H1 (cell line): ENCODE measurements at regions of chr1 and their contacts with region 1.

Region 1: GRCh38 chr1:214328770-214329469 is 48.0 kb downstream of the SMYD2 start:
- DNase-seq: peak; percentile 75 to 87
- H3K4me3 ChIP-seq: no peak overlapping the region
- H3K27ac ChIP-seq: no peak overlapping the region
- H3K4me1 ChIP-seq: no peaks in the 10 kb centered on the region; a peak in 2 of 7 replicates
- H3K27me3 ChIP-seq: no peaks in the 10 kb centered on the region
- CTCF ChIP-seq: peak; percentile 91 to 97 (median 96)
- EP300 ChIP-seq: peak in 1 of 2 experiments; percentile 8; a peak in 1 of 3 replicates
- POLR2A ChIP-seq: no peak
- RAD21 ChIP-seq: peak; percentile 100

Region 2: GRCh38 chr1:214076708-214077065 is 252.2 kb before region 1 on chr1:
- CTCF ChIA-PET with region 1: no interaction called
- POLR2A ChIA-PET with region 1: no interaction called
- DNase-seq: no peak
- H3K4me3 ChIP-seq: no peak overlapping the region
- H3K27ac ChIP-seq: no peak overlapping the region
- H3K4me1 ChIP-seq: peaks cover 0 to 9% (median 0%) of the 10 kb centered on the region in 4 experiments; a peak in 2 of 7 replicates
- H3K27me3 ChIP-seq: no peaks in the 10 kb centered on the region
- CTCF ChIP-seq: no peak
- EP300 ChIP-seq: no peak
- POLR2A ChIP-seq: no peak
- RAD21 ChIP-seq: no peak

Region 3: GRCh38 chr1:214187121-214187900 is 141.6 kb before region 1 on chr1:
- CTCF ChIA-PET with region 1: interaction called, 12 read pairs
- POLR2A ChIA-PET with region 1: no interaction called
- DNase-seq: peak in 1 of 2 experiments; percentile 56
- H3K4me3 ChIP-seq: peak overlapping the region; percentile 25 to 58 (median 42)
- H3K27ac ChIP-seq: no peak overlapping the region
- H3K4me1 ChIP-seq: peaks cover 0 to 2% (median 0%) of the 10 kb centered on the region in 4 experiments; a peak in 2 of 7 replicates
- H3K27me3 ChIP-seq: peaks cover 8 to 39% (median 35%) of the 10 kb centered on the region in 4 experiments
- CTCF ChIP-seq: no peak
- EP300 ChIP-seq: no peak
- POLR2A ChIP-seq: no peak
- RAD21 ChIP-seq: no peak

Region 4: DNA sequence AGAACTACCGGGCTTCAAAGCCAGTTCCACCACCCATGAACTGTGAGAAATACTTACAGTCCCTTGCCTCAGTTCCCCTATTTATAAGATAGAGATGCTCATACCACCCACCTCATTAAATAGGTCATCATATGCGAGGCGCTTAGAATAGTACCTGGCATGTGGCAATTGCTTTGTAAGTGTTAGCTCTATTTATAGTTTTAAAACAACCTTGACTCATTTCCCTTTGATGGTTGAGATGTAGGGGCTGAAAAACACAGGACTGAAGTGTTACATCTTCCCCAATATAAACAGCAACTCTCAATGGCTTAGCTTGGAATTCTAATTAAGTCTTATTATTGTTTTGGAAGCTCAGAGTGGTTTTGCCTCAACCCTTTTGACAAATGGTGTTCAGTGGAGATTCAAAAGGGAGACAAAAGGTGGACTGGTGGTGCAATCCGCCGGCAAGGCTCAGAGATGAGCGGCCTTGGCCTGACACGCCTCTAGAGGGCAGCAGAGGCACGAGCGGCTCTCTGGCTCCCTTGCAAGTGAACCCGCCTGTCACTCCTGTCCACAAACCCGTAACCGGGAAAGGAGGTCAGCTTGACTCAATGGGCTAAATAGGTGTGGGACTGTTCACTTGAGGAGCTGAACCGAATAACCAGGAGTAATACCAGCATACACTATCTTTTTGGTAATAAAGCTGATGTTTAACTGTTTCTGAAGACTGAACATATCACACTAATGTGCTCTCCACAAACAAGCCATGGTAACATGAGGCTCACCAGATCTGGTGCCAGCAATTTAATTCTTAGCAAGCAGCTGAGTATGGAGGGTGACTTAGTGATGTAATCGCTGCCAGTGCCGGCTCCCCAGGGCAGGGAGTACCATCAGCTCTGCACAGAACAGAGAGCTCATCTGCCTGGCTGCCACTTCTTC is 67.5 kb before region 1 on chr1:
- CTCF ChIA-PET with region 1: interaction called, 610 read pairs
- POLR2A ChIA-PET with region 1: interaction called, 4 read pairs
- DNase-seq: peak in 1 of 2 experiments; percentile 95
- H3K4me3 ChIP-seq: no peak overlapping the region
- H3K27ac ChIP-seq: no peak overlapping the region
- H3K4me1 ChIP-seq: peaks cover 0 to 3% (median 0%) of the 10 kb centered on the region in 4 experiments; a peak in 2 of 7 replicates
- H3K27me3 ChIP-seq: 0 out of 7 replicates have a peak, but pooled peaks cover 0 to 1% (median 0%) of the 10 kb centered on the region in 4 experiments
- CTCF ChIP-seq: peak; percentile 89 to 96 (median 95)
- EP300 ChIP-seq: no peak
- POLR2A ChIP-seq: no peak
- RAD21 ChIP-seq: peak; percentile 91 to 93

Region 5: GRCh38 chr1:214303141-214303930 is 25.6 kb before region 1 on chr1:
- CTCF ChIA-PET with region 1: interaction called, 108 read pairs
- POLR2A ChIA-PET with region 1: no interaction called
- DNase-seq: no peak
- H3K4me3 ChIP-seq: no peak overlapping the region
- H3K27ac ChIP-seq: no peak overlapping the region
- H3K4me1 ChIP-seq: peaks cover 0 to 3% (median 1%) of the 10 kb centered on the region in 4 experiments; a peak in 4 of 7 replicates
- H3K27me3 ChIP-seq: peaks cover 0 to 3% (median 0%) of the 10 kb centered on the region in 4 experiments; a peak in 1 of 7 replicates
- CTCF ChIP-seq: no peak
- EP300 ChIP-seq: no peak
- POLR2A ChIP-seq: no peak
- RAD21 ChIP-seq: no peak

Region 6: GRCh38 chr1:214377886-214378285 is 49.0 kb after region 1 on chr1:
- CTCF ChIA-PET with region 1: interaction called, 12 read pairs
- POLR2A ChIA-PET with region 1: no interaction called
- DNase-seq: no peak
- H3K4me3 ChIP-seq: no peak overlapping the region
- H3K27ac ChIP-seq: no peak overlapping the region
- H3K4me1 ChIP-seq: peaks cover 0 to 14% (median 8%) of the 10 kb centered on the region in 4 experiments; a peak in 4 of 7 replicates
- H3K27me3 ChIP-seq: no peaks in the 10 kb centered on the region
- CTCF ChIP-seq: no peak
- EP300 ChIP-seq: no peak
- POLR2A ChIP-seq: no peak
- RAD21 ChIP-seq: no peak

Region 7: GRCh38 chr1:214584805-214585766 is 256.2 kb after region 1 on chr1:
- CTCF ChIA-PET with region 1: interaction called, 445 read pairs
- POLR2A ChIA-PET with region 1: interaction called, 6 read pairs
- DNase-seq: no peak
- H3K4me3 ChIP-seq: no peak overlapping the region
- H3K27ac ChIP-seq: no peak overlapping the region
- H3K4me1 ChIP-seq: peaks cover 3 to 9% (median 7%) of the 10 kb centered on the region in 4 experiments; a peak in 5 of 7 replicates
- H3K27me3 ChIP-seq: no peaks in the 10 kb centered on the region
- CTCF ChIP-seq: peak in 2 of 3 experiments; percentile 57 to 70; a peak in 2 of 4 replicates
- EP300 ChIP-seq: no peak
- POLR2A ChIP-seq: no peak
- RAD21 ChIP-seq: peak; percentile 83 to 91